Heart right ventricle (tissue), 16 donors: ENCODE measurements at regions of chr17 and their contacts with region 1.

Region 1: GRCh38 chr17:67824735-67825626 is at the start of gene BPTF:
- DNase-seq: peak; percentile 92 to 93
- ATAC-seq: peak; percentile 96 to 98 (median 98)
- H3K4me3 ChIP-seq: peak within 1 kb of the TSS; percentile 55 to 92 (median 80)
- H3K27ac ChIP-seq: peak within 1 kb of the TSS; percentile 89 to 98 (median 96)
- H3K4me1 ChIP-seq: peaks cover 0 to 39% (median 39%) of the 10 kb centered on the region in 9 donors
- H3K27me3 ChIP-seq: no peaks in the 10 kb centered on the region
- CTCF ChIP-seq: peak; percentile 86 to 99 (median 96)
- total RNA-seq, gene BPTF: 56.7 to 102 (median 86.6) TPM

Region 2: GRCh38 chr17:67717624-67718329 is 107.2 kb before region 1 on chr17 and contains the start of gene NOL11:
- intact Hi-C with region 1: loop called in 2 of 10 experiments (anchors 2 to 5 kb)
- DNase-seq: peak; percentile 99
- ATAC-seq: peak; percentile 99 to 100 (median 99)
- H3K4me3 ChIP-seq: peak within 1 kb of the TSS; percentile 60 to 95 (median 84)
- H3K27ac ChIP-seq: peak within 1 kb of the TSS; percentile 65 to 94 (median 88)
- H3K4me1 ChIP-seq: peaks cover 0 to 25% (median 21%) of the 10 kb centered on the region in 9 donors
- H3K27me3 ChIP-seq: no peaks in the 10 kb centered on the region
- CTCF ChIP-seq: peak; percentile 89 to 99 (median 96)
- total RNA-seq, gene NOL11: 21.7 to 29.4 (median 24.7) TPM